ENCODE measurements at regions of chr2 and their contacts with region 1.

Region 1: GRCh38 chr2:102020596-102021181 is 28.9 kb downstream of the IL1R2 start:
- DNase-seq: peak; percentile 93
- H3K4me3 Mint-ChIP-seq: no peak overlapping the region
- H3K27ac Mint-ChIP-seq: no peak overlapping the region
- H3K4me1 Mint-ChIP-seq: peaks cover 25% of the 10 kb centered on the region
- H3K27me3 Mint-ChIP-seq: no peaks in the 10 kb centered on the region

Region 2: DNA sequence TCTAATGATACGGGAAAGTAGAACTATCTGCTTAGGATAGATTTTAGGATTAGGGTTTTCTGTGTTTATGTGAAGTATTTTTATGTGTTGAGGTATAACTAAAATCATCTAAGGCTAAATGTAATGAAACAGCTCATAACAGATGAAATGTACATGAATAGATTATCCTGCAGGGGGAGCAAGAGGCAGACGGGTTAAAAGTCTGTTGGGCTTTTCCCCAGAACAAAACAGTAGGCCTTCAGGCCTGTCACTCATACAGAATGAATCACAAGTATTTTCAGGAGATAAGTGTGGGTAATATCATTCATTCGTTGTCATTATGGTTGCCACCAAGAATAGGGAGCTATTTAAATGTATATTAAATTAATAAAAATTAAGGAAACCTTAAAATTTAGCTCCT is 136.8 kb before region 1 on chr2:
- CTCF ChIA-PET with region 1: interaction called, 16 read pairs
- intact Hi-C with region 1: loop called (anchors 5 kb)
- DNase-seq: peak; percentile 74
- H3K4me3 Mint-ChIP-seq: no peak overlapping the region
- H3K27ac Mint-ChIP-seq: peak overlapping the region; percentile 61
- H3K4me1 Mint-ChIP-seq: peaks cover 17% of the 10 kb centered on the region
- H3K27me3 Mint-ChIP-seq: no peaks in the 10 kb centered on the region

Region 3: GRCh38 chr2:102033031-102033749 is 12.5 kb after region 1 on chr2:
- CTCF ChIA-PET with region 1: interaction called, 11 read pairs
- intact Hi-C with region 1: no loop called
- DNase-seq: peak; percentile 22
- H3K4me3 Mint-ChIP-seq: no peak overlapping the region
- H3K27ac Mint-ChIP-seq: peak overlapping the region; percentile 48
- H3K4me1 Mint-ChIP-seq: peaks cover 40% of the 10 kb centered on the region
- H3K27me3 Mint-ChIP-seq: no peaks in the 10 kb centered on the region

Region 4: GRCh38 chr2:102103992-102104871 is 83.5 kb after region 1 on chr2:
- CTCF ChIA-PET with region 1: interaction called, 5 read pairs
- intact Hi-C with region 1: loop called (anchors 2 kb)
- DNase-seq: peak; percentile 96
- H3K4me3 Mint-ChIP-seq: peak overlapping the region; percentile 71
- H3K27ac Mint-ChIP-seq: peak overlapping the region; percentile 86
- H3K4me1 Mint-ChIP-seq: peaks cover 36% of the 10 kb centered on the region
- H3K27me3 Mint-ChIP-seq: peaks cover 2% of the 10 kb centered on the region

Region 5: GRCh38 chr2:102235491-102235890 is 214.8 kb after region 1 on chr2:
- CTCF ChIA-PET with region 1: interaction called, 96 read pairs
- intact Hi-C with region 1: loop called (anchors 1 kb)
- DNase-seq: peak; percentile 68
- H3K4me3 Mint-ChIP-seq: no peak overlapping the region
- H3K27ac Mint-ChIP-seq: no peak overlapping the region
- H3K4me1 Mint-ChIP-seq: peaks cover 43% of the 10 kb centered on the region
- H3K27me3 Mint-ChIP-seq: no peaks in the 10 kb centered on the region